CD4-positive, alpha-beta T cell (primary cell): ENCODE measurements at regions of chr15 and their contacts with region 1.

Region 1: GRCh38 chr15:51982013-51982769 is 10.6 kb upstream of the LEO1 start:
- DNase-seq: peak in 11 of 14 experiments; percentile 1 to 83 (median 36)
- ATAC-seq: peak; percentile 97
- H3K4me3 ChIP-seq: peak overlapping the region; percentile 34
- H3K4me3 Mint-ChIP-seq: peak overlapping the region; percentile 84
- H3K27ac ChIP-seq: no peak overlapping the region
- H3K27ac Mint-ChIP-seq: peak overlapping the region; percentile 74
- H3K4me1 ChIP-seq: peaks cover 8% of the 10 kb centered on the region
- H3K4me1 Mint-ChIP-seq: peaks cover 11% of the 10 kb centered on the region
- H3K27me3 ChIP-seq: no peaks in the 10 kb centered on the region
- H3K27me3 Mint-ChIP-seq: no peaks in the 10 kb centered on the region
- CTCF ChIP-seq: peak; percentile 75

Region 2: GRCh38 chr15:51971375-51972133 is 10.6 kb before region 1 on chr15 and contains the start of gene LEO1:
- CTCF ChIA-PET with region 1: no interaction called
- POLR2A ChIA-PET with region 1: interaction called, 24 read pairs
- intact Hi-C with region 1: no loop called
- DNase-seq: peak; percentile 73 to 97 (median 83)
- ATAC-seq: peak; percentile 92
- H3K4me3 ChIP-seq: peak within 1 kb of the TSS; percentile 98
- H3K4me3 Mint-ChIP-seq: peak within 1 kb of the TSS; percentile 95
- H3K27ac ChIP-seq: peak within 1 kb of the TSS; percentile 79 to 85
- H3K27ac Mint-ChIP-seq: peak within 1 kb of the TSS; percentile 92
- H3K4me1 ChIP-seq: peaks cover 19% of the 10 kb centered on the region
- H3K4me1 Mint-ChIP-seq: peaks cover 28% of the 10 kb centered on the region
- H3K27me3 ChIP-seq: no peaks in the 10 kb centered on the region
- H3K27me3 Mint-ChIP-seq: no peaks in the 10 kb centered on the region
- CTCF ChIP-seq: peak; percentile 47
- total RNA-seq, gene LEO1: 6.2 to 6.7 TPM

Region 3: DNA sequence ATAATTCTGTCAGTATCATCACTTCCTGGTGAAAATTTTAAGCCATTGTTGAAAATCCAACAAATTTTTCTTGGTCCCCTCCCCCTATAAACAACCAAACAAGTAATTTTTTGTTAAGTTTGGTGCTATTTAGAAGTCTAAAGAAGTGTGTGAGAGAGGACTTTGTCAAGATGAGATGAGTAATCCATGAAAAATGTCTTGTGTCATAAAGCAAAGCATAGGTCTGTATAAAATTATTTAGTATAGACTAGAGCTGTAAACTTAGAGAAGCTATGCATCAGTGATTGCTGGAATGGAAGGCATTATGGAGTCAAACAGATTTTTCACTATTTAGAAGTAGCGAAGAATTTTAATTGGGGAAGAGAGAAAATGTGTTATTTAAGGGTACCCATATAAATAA is 68.2 kb after region 1 on chr15:
- CTCF ChIA-PET with region 1: interaction called, 3 read pairs
- POLR2A ChIA-PET with region 1: interaction called, 4 read pairs
- intact Hi-C with region 1: loop called in 1 of 2 experiments (anchors 1 kb)
- DNase-seq: no peak
- ATAC-seq: no peak
- H3K4me3 ChIP-seq: no peak overlapping the region
- H3K4me3 Mint-ChIP-seq: no peak overlapping the region
- H3K27ac ChIP-seq: no peak overlapping the region
- H3K27ac Mint-ChIP-seq: no peak overlapping the region
- H3K4me1 ChIP-seq: peaks cover 6% of the 10 kb centered on the region
- H3K4me1 Mint-ChIP-seq: peaks cover 31% of the 10 kb centered on the region
- H3K27me3 ChIP-seq: no peaks in the 10 kb centered on the region
- H3K27me3 Mint-ChIP-seq: no peaks in the 10 kb centered on the region
- CTCF ChIP-seq: no peak

Region 4: DNA sequence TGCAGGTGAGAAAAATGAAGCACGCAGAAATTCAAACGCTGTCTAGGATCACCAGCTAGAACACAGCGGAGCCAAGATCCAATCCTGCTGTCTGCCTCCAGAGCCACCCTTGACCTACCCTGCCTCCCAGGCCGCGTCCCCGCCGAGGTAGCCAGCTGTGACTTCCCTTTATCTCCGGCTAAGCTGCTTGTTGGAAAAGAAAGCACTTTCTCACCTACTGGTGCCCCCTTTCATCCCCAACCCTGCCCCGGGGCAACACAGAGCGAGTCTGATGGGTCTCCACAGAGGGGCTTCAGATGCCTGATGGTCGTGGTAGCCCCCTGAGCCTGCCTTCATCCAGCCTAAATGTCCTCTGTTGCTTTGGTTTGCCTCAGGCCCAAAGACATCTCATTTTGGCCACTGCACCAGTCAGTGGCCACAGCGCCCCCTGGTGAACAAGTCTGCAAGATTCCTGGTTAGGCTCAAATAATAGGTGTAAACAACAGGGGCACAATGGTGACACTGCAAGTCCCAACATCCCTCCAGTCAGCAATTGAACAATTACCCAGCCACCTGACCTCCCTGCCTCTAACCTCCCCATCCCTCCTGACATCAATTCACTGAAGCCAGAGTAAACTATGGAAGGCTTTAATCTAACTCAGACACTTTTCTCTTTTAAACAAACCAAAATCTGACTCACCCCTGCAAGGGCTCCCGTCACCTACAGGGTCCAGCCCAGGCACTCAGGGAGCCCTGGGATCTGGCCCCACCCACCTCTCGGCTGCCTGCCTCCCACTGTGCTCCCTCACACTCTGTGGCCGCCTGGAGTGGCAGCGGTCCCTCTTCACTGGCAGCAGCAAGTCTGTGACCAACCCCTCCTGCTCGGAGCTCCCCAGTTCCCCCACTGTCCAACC is 157.7 kb after region 1 on chr15:
- CTCF ChIA-PET with region 1: no interaction called
- POLR2A ChIA-PET with region 1: no interaction called
- intact Hi-C with region 1: loop called (anchors 1 to 2 kb)
- DNase-seq: peak; percentile 30 to 76 (median 54)
- ATAC-seq: peak; percentile 43
- H3K4me3 ChIP-seq: no peak overlapping the region
- H3K4me3 Mint-ChIP-seq: no peak overlapping the region
- H3K27ac ChIP-seq: no peak overlapping the region
- H3K27ac Mint-ChIP-seq: peak overlapping the region; percentile 49
- H3K4me1 ChIP-seq: peaks cover 27% of the 10 kb centered on the region
- H3K4me1 Mint-ChIP-seq: peaks cover 28% of the 10 kb centered on the region
- H3K27me3 ChIP-seq: no peaks in the 10 kb centered on the region
- H3K27me3 Mint-ChIP-seq: no peaks in the 10 kb centered on the region
- CTCF ChIP-seq: peak; percentile 74

Region 5: DNA sequence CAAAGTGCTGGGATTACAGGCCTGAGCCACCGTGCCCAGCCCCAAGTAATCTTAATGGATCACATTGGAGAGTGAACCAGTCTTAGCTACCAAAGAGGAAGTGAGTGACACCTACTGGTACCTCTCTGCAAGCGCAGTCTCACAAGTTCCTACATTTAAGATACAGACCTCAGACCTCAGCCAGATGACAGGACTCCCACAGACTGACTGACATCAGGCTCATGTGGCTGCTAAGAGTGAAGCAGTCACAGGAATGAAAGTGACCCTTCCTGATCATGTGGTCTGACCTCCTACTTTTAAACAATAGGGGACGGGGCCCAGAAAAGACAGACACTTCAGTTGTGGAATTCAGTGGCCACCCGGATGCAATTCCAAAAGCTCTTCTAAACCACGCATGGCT is 245.3 kb after region 1 on chr15:
- CTCF ChIA-PET with region 1: no interaction called
- POLR2A ChIA-PET with region 1: no interaction called
- intact Hi-C with region 1: loop called (anchors 1 to 5 kb)
- DNase-seq: peak; percentile 40 to 88 (median 61)
- ATAC-seq: peak; percentile 99
- H3K4me3 ChIP-seq: no peak overlapping the region
- H3K4me3 Mint-ChIP-seq: no peak overlapping the region
- H3K27ac ChIP-seq: no peak overlapping the region
- H3K27ac Mint-ChIP-seq: no peak overlapping the region
- H3K4me1 ChIP-seq: peaks cover 11% of the 10 kb centered on the region
- H3K4me1 Mint-ChIP-seq: peaks cover 22% of the 10 kb centered on the region
- H3K27me3 ChIP-seq: no peaks in the 10 kb centered on the region
- H3K27me3 Mint-ChIP-seq: no peaks in the 10 kb centered on the region
- CTCF ChIP-seq: peak; percentile 66